Thyroid gland (tissue), 4 donors: ENCODE measurements at regions of chr4 and their contacts with region 1.

Region 1: GRCh38 chr4:139295206-139295941 is 5.9 kb upstream of the NAA15 start:
- DNase-seq: peak; percentile 97 to 98
- H3K4me3 ChIP-seq: peak overlapping the region; percentile 66 to 97 (median 72)
- H3K27ac ChIP-seq: peak overlapping the region; percentile 28 to 90 (median 72)
- H3K4me1 ChIP-seq: peaks cover 8 to 13% of the 10 kb centered on the region in 2 donors
- H3K27me3 ChIP-seq: no peaks in the 10 kb centered on the region
- CTCF ChIP-seq: peak; percentile 77 to 96 (median 90)
- POLR2A ChIP-seq: peak in 1 of 2 donors; percentile 79

Region 2: DNA sequence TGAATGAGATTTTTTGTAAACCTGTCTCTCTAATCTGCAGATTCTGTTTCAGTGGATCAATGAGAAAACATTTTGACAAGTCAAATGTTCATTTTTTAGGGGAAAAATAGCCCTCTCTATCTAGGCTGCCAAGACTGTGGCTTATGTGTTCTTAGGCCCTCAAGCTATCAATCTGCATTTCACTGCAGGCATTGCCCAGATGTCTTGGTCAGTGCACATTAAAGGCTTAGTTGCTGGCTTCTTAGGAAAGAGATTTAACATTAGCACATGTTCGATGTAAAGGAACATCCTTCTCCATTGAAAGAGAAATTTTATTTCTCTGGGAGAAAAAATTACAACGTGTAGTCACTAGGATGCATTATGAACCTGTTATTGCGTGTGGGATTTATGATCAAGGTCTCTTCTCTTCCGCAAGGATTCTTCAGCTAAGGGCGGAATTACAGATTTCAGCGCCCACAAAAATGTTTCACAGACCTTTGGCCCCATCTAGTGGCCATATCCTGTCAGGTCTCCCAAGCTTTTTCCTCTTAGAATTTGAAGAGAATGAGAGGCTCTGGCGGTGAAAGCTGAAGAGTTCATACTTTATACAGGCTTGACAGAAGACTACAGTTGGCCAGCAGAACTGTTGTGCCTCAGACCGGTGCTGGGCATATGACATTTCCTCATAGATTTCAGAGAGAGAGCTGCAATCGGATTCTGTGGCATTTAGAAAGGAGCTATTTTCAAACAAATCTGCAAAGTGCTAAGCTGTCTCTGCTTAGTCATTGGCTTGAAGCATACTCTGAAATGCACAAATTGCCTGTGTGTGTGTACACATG is 424.4 kb before region 1 on chr4:
- intact Hi-C with region 1: no loop called
- DNase-seq: peak; percentile 61 to 71
- H3K4me3 ChIP-seq: no peak overlapping the region
- H3K27ac ChIP-seq: no peak overlapping the region
- H3K4me1 ChIP-seq: peaks cover 0 to 4% of the 10 kb centered on the region in 2 donors
- H3K27me3 ChIP-seq: no peaks in the 10 kb centered on the region
- CTCF ChIP-seq: peak; percentile 46 to 89 (median 82)
- POLR2A ChIP-seq: no peak

Region 3: DNA sequence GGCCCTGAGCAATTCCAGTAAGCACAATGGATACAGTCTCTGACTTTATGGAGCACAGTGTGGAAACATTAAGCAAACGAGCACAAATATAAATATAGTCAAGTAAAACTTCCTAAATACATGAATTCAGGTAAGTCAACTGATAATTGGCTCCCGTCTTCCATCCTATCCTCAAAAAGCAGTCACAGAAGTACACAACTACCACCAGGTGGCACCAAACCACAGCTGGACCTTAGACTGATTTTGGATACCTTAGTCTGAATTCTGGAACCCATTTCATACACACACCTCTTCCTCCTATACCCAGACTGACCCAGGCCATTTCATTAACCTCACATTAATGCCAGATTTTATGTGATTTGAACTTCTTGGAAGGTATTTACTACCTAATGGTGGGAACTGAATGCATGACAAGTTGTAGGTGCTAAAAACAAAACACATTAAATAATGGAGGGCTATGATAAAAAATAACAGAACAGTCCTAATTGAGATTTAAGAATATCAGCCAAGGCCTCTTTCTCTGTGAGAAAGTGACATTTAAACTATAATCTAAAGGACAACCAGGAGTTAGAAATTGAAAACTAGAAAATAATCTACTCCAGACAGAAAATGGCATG is 195.9 kb before region 1 on chr4:
- intact Hi-C with region 1: loop called (anchors 5 kb)
- DNase-seq: peak; percentile 68 to 83
- H3K4me3 ChIP-seq: no peak overlapping the region
- H3K27ac ChIP-seq: no peak overlapping the region
- H3K4me1 ChIP-seq: no peaks in the 10 kb centered on the region
- H3K27me3 ChIP-seq: no peaks in the 10 kb centered on the region
- CTCF ChIP-seq: peak; percentile 34 to 94 (median 80)
- POLR2A ChIP-seq: no peak

Region 4: DNA sequence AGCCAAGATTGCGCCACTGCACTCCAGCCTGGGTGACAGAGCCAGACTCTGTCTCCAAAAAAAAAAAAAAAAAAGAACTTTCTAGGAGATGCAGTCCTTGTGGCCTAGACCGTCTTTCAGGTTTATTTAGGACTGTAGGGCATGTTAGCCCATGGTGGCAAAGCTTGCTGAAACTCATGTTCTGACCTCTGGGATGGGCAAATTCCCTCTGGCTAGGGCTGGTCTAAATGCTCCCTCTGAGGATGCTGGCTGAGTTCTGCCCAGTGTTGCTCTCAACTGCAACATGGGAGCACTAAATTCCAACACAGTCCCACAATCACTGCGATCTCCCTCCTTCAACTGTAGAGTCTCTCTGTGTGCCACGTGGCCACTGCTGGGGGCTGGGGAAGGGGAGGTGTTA is 138.3 kb after region 1 on chr4:
- intact Hi-C with region 1: no loop called
- DNase-seq: no peak
- H3K4me3 ChIP-seq: no peak overlapping the region
- H3K27ac ChIP-seq: no peak overlapping the region
- H3K4me1 ChIP-seq: no peaks in the 10 kb centered on the region
- H3K27me3 ChIP-seq: no peaks in the 10 kb centered on the region
- CTCF ChIP-seq: no peak
- POLR2A ChIP-seq: no peak